Heart right ventricle (tissue), 16 donors: ENCODE measurements at regions of chr6 and their contacts with region 1.

Region 1: DNA sequence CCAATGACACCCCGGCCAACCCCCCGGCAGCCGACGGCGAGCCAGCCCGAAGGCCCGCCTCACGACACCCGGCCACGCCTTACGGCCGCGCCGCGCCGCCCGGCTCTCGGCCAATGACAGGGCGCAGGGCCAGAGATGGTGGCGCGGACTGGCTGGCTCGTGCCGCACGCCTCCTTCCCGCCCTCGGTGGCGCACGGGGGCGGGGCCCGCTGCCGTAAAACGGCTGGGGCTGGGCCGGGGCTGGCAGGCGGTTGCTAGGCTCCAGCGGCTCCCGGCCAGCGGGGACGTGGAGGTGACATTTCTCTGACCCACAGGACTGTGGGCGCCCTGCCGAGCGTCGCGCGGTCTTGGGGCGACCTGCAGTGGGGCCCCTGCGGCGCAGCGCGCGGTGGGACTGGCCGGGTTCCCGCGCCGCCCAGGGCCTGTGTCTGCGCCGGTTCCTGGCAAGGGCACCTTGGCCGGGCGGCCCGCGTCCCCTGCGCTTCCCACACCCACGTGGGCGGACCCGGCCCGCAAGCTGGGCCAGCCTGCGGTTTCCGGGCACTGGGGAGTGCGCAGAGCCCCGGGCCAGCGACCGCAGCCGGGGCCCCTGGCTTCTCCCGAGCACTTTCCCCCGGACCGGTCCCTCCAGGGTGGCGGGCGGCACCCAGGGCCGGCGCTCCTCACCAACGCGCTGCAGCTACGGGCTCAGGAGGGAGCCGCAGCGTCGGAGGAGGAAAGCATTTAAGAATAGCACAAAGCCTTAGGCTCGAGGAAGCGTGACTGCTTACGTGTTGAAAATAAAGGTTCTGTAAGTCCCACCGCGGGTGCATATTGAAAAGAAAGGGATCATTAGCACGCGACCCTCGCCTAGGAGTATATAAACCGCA is at the start of gene MPC1:
- DNase-seq: peak; percentile 96 to 97
- ATAC-seq: peak; percentile 96 to 98 (median 96)
- H3K4me3 ChIP-seq: peak within 1 kb of the TSS; percentile 69 to 97 (median 91)
- H3K27ac ChIP-seq: peak within 1 kb of the TSS; percentile 91 to 98 (median 96)
- H3K4me1 ChIP-seq: peaks cover 3 to 40% (median 25%) of the 10 kb centered on the region in 9 donors
- H3K27me3 ChIP-seq: no peaks in the 10 kb centered on the region
- CTCF ChIP-seq: no peak
- total RNA-seq, gene MPC1: 276 to 736 (median 588) TPM

Region 2: DNA sequence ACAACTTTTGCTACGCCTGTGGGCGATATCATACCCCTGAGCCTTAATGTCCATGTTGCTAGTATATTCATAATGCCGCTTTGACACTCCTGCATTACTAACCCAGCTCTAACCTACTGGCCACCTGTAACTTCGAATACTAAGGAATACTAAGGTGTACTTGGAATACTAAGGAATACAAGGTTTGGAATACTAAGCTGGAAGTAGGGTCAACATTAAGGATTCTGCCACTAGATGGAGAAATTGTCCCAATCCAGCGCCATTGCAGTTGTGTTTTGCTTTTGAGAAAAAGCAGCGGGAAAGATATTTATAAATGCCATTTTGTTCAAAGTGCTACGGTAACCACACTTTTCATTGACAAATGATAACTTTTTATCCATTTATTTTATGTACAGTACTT is 226.2 kb before region 1 on chr6:
- intact Hi-C with region 1: loop called in 1 of 10 experiments (anchors 5 kb)
- DNase-seq: no peak
- ATAC-seq: no peak
- H3K4me3 ChIP-seq: no peak overlapping the region
- H3K27ac ChIP-seq: no peak overlapping the region
- H3K4me1 ChIP-seq: no peaks in the 10 kb centered on the region
- H3K27me3 ChIP-seq: peaks cover 0 to 46% (median 17%) of the 10 kb centered on the region in 7 donors
- CTCF ChIP-seq: peak in 6 of 9 donors; percentile 34 to 55 (median 42)

Region 3: DNA sequence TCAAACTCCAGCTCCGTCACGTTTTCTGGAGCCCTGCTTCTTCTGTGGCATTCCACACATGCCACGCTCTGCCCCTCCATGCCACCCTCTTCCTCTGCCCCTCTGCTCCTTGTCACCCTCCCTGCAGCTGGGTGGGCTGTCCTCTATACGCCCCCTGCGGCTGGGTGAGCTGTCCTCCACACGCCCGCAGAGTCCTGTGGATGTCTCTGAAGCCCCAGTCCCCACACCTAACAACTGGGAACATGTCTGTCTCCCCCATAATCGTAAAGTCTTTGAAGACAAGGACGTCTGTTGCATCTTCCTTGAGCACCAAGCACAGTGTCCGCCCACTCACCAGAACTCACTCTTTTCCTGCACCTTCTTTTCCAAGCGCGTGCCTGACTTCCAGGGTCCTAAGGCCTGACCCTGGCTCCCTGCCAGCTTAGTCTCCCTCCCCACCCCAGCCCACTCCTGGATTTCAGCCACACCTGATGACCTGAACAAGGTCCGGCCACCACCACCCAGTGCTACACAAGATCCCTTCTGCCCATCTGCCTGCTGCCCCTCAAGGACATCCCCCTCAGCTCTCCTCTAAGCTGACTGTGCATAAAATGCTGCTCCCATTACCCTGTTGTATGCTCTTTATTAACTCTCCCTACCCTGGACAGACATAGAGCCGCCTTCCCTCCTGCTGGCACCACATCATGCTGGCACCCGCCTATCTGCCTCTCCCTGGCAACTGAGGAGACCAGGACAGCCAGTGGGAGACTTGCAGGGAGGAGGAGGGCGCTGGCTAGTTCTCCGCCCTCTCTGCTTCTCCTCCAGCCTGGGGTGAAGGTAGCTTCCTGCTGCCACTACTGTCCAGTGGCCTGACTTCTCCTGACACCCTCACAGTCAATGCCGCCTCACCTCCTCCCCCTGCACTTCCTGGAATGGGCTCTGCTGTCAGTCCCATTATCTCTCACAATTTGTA is 64.2 kb before region 1 on chr6:
- intact Hi-C with region 1: loop called in 1 of 10 experiments (anchors 5 kb)
- DNase-seq: peak; percentile 41 to 48
- ATAC-seq: peak; percentile 78 to 96 (median 92)
- H3K4me3 ChIP-seq: no peak overlapping the region
- H3K27ac ChIP-seq: no peak overlapping the region
- H3K4me1 ChIP-seq: peaks cover 0 to 11% (median 0%) of the 10 kb centered on the region in 9 donors
- H3K27me3 ChIP-seq: no peaks in the 10 kb centered on the region
- CTCF ChIP-seq: no peak

Region 4: GRCh38 chr6:166335378-166336302 is 47.5 kb before region 1 on chr6:
- intact Hi-C with region 1: loop called in 5 of 10 experiments (anchors 5 kb)
- DNase-seq: no peak
- ATAC-seq: no peak
- H3K4me3 ChIP-seq: no peak overlapping the region
- H3K27ac ChIP-seq: no peak overlapping the region
- H3K4me1 ChIP-seq: peaks cover 9 to 70% (median 40%) of the 10 kb centered on the region in 9 donors
- H3K27me3 ChIP-seq: no peaks in the 10 kb centered on the region
- CTCF ChIP-seq: no peak

Region 5: DNA sequence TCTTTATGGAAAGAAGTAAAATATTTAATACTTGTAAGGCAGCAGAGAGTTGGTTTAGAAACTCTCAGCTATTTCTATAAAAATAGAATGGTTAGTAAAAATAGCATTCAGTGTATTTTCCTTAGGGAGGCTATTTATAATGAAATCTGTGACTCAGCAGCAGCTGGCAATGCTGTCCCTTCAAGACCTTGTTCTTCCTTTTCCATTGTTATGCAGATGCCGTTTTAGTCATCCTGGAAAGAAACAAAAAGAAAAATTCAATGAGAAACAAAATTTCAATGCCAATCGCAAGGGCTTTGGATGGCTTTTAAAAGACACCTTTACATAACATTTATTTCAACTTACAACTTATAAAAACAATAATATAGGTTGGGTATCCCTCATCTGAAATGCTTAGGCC is 17.9 kb before region 1 on chr6:
- intact Hi-C with region 1: loop called in 2 of 10 experiments (anchors 2 kb)
- DNase-seq: peak in 1 of 2 donors; percentile 41
- ATAC-seq: peak in 7 of 8 donors; percentile 52 to 85 (median 67)
- H3K4me3 ChIP-seq: peak overlapping the region in 4 of 10 donors; percentile 12 to 20 (median 16)
- H3K27ac ChIP-seq: peak overlapping the region in 9 of 10 donors; percentile 60 to 88 (median 71)
- H3K4me1 ChIP-seq: peaks cover 6 to 95% (median 57%) of the 10 kb centered on the region in 9 donors
- H3K27me3 ChIP-seq: no peaks in the 10 kb centered on the region
- CTCF ChIP-seq: no peak